Psoas muscle (tissue), 8 donors: ENCODE measurements at regions of chr4 and their contacts with region 1.

Region 1: DNA sequence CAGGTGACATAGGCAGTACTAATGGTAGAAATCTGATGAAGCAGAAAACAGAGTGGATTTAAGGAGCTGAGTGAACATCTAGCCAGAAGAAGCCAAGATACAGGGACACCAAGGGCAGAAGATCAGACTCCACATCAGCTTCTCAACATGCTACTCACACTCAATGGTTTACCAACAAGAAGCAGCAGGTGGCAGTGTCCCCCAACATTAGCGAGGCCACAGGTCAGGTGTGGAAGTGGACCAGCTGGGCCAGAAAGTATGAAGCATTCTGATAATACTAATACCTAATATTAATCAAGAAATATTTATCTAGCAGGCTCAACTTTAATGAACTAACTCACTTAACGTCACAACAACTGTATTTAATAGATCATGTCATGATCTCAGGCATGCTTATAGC is 73.4 kb upstream of the TTC29 start:
- DNase-seq: peak; percentile 47 to 68
- ATAC-seq: peak; percentile 52 to 78 (median 56)
- H3K4me3 ChIP-seq: no peak overlapping the region
- H3K27ac ChIP-seq: no peak overlapping the region
- H3K4me1 ChIP-seq: no peaks in the 10 kb centered on the region
- H3K27me3 ChIP-seq: no peaks in the 10 kb centered on the region
- CTCF ChIP-seq: peak; percentile 70

Region 2: DNA sequence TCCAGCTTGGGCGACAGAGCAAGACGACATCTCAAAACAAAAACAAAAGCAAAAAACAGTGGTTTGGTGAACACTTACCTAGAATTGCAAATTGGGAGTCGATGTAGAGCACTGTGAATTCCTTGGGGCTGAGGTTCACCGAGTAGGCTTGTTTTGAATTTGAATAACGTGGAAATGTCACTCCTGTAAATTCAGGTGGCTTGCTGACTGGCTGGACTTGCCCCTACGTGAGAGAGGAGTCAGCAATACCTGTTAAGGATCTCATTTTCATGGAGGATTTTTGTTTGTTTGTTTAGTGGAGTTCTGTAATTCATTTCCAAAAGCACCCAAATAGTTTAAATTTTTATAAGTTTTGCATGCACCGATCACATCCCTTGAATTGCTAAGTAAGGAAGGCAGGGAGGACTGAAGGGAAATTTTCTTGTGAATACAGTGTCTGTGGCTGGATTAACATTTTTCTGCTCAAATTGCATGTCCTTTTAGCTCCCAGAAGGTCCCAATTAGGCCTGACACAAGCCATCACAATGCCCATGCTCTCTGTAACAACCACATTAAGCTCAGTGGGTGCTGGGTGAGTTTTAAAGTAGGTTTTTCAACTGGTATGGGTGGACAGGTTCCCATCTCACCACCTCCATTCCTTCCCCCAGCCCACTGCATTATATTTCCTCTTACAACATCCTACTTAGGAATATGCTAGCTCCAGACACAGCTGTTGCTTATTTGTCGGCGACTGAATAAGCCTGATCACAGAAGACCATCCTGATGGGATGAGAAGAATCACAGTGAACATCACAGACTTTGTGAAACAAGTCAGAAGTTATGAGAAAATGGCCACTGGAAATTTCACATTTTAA is 14.9 kb before region 1 on chr4:
- intact Hi-C with region 1: no loop called
- DNase-seq: no peak
- ATAC-seq: no peak
- H3K4me3 ChIP-seq: no peak overlapping the region
- H3K27ac ChIP-seq: no peak overlapping the region
- H3K4me1 ChIP-seq: no peaks in the 10 kb centered on the region
- H3K27me3 ChIP-seq: no peaks in the 10 kb centered on the region
- CTCF ChIP-seq: no peak

Region 3: DNA sequence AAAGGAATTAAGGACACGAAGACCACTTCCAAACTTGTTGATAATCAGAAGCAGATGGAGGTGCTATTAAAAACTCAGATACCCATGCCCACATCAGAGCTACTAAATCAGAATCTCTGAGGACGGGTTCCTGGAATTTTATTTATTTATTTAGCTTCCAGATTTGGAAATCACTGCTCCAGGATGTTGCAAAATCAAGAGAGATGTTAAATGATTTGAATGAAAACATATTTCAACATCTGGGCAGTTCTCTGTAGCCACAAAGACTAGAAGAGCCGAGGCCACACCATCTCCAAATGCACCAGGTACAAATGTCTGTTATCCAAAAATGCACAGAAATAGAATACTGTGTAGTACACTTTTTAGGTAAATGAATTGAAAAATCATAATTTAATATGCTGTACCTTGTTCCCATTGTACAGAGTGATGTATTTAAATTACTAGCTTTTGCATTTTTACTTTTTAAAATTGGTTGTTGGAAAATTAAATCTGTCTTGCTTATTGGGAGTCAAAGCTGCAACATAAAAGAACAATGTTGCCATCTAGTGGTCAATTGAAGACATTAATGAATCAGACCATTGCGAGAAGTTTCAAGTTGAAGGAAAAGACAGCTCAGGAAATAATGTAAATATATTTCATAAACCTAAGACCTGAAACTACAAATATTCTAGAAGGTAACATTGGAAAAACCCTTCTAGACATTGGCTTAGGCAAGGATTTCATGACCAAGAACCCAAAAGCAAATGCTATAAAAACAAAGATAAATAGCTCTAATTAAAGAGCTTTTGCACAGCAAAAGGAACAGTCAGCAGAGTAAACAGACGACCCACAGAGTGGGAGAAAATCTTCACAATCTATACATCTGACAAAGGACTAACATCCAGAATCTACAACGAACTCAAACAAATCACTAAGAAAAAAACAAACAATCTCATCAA is 77.9 kb after region 1 on chr4:
- intact Hi-C with region 1: loop called (anchors 2 kb)
- DNase-seq: no peak
- ATAC-seq: peak in 3 of 4 donors; percentile 40 to 77 (median 44)
- H3K4me3 ChIP-seq: no peak overlapping the region
- H3K27ac ChIP-seq: no peak overlapping the region
- H3K4me1 ChIP-seq: no peaks in the 10 kb centered on the region
- H3K27me3 ChIP-seq: no peaks in the 10 kb centered on the region
- CTCF ChIP-seq: peak; percentile 71

Region 4: GRCh38 chr4:147351083-147351787 is 332.2 kb after region 1 on chr4:
- intact Hi-C with region 1: no loop called
- DNase-seq: no peak
- ATAC-seq: no peak
- H3K4me3 ChIP-seq: no peak overlapping the region
- H3K27ac ChIP-seq: no peak overlapping the region
- H3K4me1 ChIP-seq: no peaks in the 10 kb centered on the region
- H3K27me3 ChIP-seq: no peaks in the 10 kb centered on the region
- CTCF ChIP-seq: no peak